Caco-2 (cell line): ENCODE measurements at regions of chr1 and their contacts with region 1.

Region 1: DNA sequence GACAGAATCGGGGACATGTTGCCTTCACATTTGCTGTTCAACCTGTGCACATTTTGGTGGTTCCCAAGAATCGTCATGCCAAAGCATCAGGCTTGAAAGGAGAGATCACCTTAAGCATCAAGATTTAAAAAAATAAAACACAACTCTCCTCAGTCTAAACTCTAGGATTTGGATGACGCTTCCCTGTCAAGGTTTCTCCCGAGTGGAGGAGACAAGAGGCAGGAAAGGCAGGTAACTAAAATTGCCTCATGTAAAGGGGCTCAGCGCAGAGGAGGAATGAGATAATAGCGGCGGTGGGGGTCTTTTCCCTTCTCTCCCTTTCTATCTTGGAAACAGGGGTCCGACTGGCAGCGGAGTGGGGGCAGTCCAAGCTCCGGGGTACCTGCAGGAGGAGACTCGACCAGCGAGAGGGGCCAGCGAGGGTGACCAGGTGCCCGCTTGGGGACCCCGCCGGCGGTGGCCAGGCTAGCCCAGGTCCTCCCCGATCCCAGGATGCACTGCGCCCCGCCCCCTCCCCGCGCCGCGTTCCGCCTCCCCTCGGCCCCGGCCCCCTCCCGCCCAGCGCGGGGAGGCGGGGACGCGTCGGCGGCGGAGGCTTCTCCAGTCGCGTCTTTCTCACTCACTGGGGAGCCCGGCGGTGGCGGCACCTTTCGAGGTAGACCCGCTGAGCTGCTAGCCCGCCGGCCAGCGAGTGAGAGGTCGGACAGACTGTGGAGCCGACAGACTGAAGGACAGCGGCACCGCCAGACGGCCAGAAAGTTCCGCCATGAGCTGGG is at the start of gene FNBP1L:
- DNase-seq: peak; percentile 85 to 87
- H3K4me3 ChIP-seq: peak within 1 kb of the TSS; percentile 81
- H3K4me3 Mint-ChIP-seq: peak within 1 kb of the TSS; percentile 87
- H3K27ac Mint-ChIP-seq: peak within 1 kb of the TSS; percentile 83
- H3K4me1 ChIP-seq: peaks cover 5% of the 10 kb centered on the region
- H3K4me1 Mint-ChIP-seq: peaks cover 7% of the 10 kb centered on the region
- H3K27me3 ChIP-seq: no peaks in the 10 kb centered on the region
- H3K27me3 Mint-ChIP-seq: no peaks in the 10 kb centered on the region
- CTCF ChIP-seq: no peak
- total RNA-seq, gene FNBP1L: 32.7 and 33.4 TPM in 2 replicates

Region 2: DNA sequence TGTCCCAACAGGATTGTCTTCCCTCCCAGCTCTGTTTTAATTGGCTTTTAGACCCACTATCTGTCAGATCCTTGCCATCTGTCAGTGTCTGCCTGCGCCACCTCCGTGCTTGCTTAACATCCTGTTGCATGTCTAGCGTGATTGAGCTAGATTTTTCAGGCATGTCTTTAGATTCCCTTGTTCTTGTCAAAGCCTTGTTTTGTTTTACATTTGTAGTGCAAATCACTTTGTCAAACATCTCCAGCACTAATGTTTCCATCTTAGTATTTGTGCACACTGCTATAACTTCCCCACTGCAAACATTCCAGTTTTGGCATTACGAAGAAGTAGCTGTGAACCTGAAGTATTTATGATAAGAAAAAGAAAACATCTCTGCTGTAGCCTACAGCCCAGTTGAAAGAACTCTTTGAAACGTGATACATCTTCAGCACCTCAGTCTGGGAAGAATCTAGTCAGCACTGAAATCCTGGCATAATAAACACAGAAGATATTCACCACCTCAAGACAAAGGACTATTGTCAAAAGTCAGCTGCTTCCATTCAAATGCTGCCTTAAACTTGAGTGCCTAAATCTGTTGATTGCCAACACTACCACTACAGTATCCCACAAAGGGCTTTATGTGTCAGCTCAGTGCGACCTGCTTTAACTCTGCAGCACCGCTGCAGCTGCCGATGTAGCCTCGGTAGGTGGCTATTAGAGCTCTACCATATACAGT is 105.2 kb after region 1 on chr1:
- CTCF ChIA-PET with region 1: no interaction called
- POLR2A ChIA-PET with region 1: no interaction called
- intact Hi-C with region 1: loop called (anchors 10 kb)
- DNase-seq: peak in 1 of 2 experiments; percentile 11
- H3K4me3 ChIP-seq: no peak overlapping the region
- H3K4me3 Mint-ChIP-seq: no peak overlapping the region
- H3K27ac Mint-ChIP-seq: no peak overlapping the region
- H3K4me1 ChIP-seq: peaks cover 17% of the 10 kb centered on the region
- H3K4me1 Mint-ChIP-seq: peaks cover 32% of the 10 kb centered on the region
- H3K27me3 ChIP-seq: no peaks in the 10 kb centered on the region
- H3K27me3 Mint-ChIP-seq: no peaks in the 10 kb centered on the region
- CTCF ChIP-seq: no peak

Region 3: DNA sequence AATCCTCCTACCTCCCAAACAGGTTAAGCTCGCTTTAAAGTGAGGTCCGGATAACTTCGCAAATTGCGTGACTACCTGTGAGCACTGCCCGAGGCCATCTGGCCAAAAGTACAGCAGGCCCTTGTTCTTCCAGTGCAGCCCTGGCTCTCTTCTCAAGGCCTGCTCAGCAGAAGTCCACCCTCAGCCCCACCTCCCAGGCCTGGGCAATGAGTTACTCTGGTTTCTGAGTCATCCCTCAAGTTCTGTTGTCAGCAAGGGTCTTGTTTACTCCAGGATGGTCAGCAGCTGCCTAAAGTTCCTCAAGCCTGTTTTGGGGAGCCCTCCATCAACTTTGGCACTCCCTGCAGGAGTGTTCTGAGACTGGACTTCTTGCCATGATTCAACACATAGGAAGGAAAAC is 132.2 kb after region 1 on chr1:
- CTCF ChIA-PET with region 1: no interaction called
- POLR2A ChIA-PET with region 1: no interaction called
- intact Hi-C with region 1: loop called (anchors 10 kb)
- DNase-seq: peak; percentile 64 to 78
- H3K4me3 ChIP-seq: no peak overlapping the region
- H3K4me3 Mint-ChIP-seq: no peak overlapping the region
- H3K27ac Mint-ChIP-seq: no peak overlapping the region
- H3K4me1 ChIP-seq: peaks cover 51% of the 10 kb centered on the region
- H3K4me1 Mint-ChIP-seq: peaks cover 6% of the 10 kb centered on the region
- H3K27me3 ChIP-seq: no peaks in the 10 kb centered on the region
- H3K27me3 Mint-ChIP-seq: no peaks in the 10 kb centered on the region
- CTCF ChIP-seq: no peak